HCT116 (cell line): ENCODE measurements at regions of chrX and their contacts with region 1.

Region 1: GRCh38 chrX:100615005-100615404 is 21.6 kb downstream of the TSPAN6 start:
- DNase-seq: peak; percentile 22
- ATAC-seq: peak; percentile 71
- H3K4me3 ChIP-seq: no peak overlapping the region
- H3K27ac ChIP-seq: no peak overlapping the region
- H3K4me1 ChIP-seq: peaks cover 0 to 9% of the 10 kb centered on the region in 2 experiments; a peak in 2 of 4 replicates
- H3K27me3 ChIP-seq: no peaks in the 10 kb centered on the region
- CTCF ChIP-seq: peak; percentile 44 to 52 (median 51); a peak in 5 of 6 replicates
- POLR2A ChIP-seq: no peak
- RAD21 ChIP-seq: peak; percentile 30

Region 2: GRCh38 chrX:100512471-100512870 is 102.5 kb before region 1 on chrX:
- CTCF ChIA-PET with region 1: no interaction called
- POLR2A ChIA-PET with region 1: no interaction called
- RAD21 ChIA-PET with region 1: no interaction called
- intact Hi-C with region 1: loop called (anchors 10 kb)
- DNase-seq: peak; percentile 1
- ATAC-seq: no peak; the same call in 1 of the 2 replicates
- H3K4me3 ChIP-seq: no peak overlapping the region
- H3K27ac ChIP-seq: no peak overlapping the region
- H3K4me1 ChIP-seq: no peaks in the 10 kb centered on the region
- H3K27me3 ChIP-seq: no peaks in the 10 kb centered on the region; the same call in 1 of the 2 replicates
- CTCF ChIP-seq: peak; percentile 22 to 46 (median 40); a peak in 4 of 6 replicates
- POLR2A ChIP-seq: no peak
- RAD21 ChIP-seq: peak; percentile 53

Region 3: GRCh38 chrX:100636321-100636991 is 21.5 kb after region 1 on chrX and contains the start of gene TSPAN6:
- CTCF ChIA-PET with region 1: interaction called, 11 read pairs
- POLR2A ChIA-PET with region 1: interaction called, 3 read pairs
- RAD21 ChIA-PET with region 1: no interaction called
- intact Hi-C with region 1: no loop called
- DNase-seq: peak; percentile 81
- ATAC-seq: peak; percentile 99
- H3K4me3 ChIP-seq: peak within 1 kb of the TSS; percentile 61 to 66
- H3K27ac ChIP-seq: peak within 1 kb of the TSS; percentile 52; the same call in 1 of the 2 replicates
- H3K4me1 ChIP-seq: peaks cover 0 to 9% of the 10 kb centered on the region in 2 experiments; a peak in 1 of 4 replicates
- H3K27me3 ChIP-seq: no peaks in the 10 kb centered on the region
- CTCF ChIP-seq: peak; percentile 45 to 58 (median 49); a peak in 5 of 6 replicates
- POLR2A ChIP-seq: no peak
- RAD21 ChIP-seq: peak; percentile 46
- total RNA-seq, gene TSPAN6: 25.0 TPM

Region 4: DNA sequence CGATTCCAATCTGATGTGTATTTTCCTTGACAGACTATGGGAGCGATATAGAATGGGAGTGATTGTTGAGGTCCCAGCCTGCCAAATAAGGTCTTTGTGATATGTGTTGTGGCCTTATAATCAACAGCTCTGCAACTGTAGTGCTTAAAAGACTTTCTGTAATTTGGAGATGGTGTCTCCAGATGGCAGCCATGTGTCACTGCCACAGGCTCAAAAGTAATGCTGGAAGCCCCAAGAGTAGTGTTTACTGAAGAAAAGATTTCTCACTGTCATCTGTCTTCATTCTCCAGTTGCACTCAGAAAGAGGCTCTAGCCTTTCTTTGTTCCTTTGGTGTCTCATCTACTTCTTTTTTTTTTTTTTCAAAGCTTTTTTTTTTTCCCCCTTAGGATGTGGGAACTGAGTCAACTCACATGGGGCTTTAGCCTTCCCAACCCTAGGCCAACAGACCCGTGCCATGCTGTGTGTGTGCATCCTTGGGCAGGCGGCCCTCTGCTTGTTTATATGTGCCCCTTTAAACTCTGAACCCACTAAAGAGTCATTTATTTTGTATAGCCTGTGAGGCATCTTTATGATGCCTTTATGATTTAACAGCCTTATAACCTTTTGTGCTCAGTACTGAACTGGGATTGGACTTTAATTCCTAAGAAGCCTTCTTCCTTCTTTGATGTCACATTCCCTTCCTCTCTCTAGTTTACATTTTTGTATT is 44.6 kb after region 1 on chrX:
- CTCF ChIA-PET with region 1: no interaction called
- POLR2A ChIA-PET with region 1: no interaction called
- RAD21 ChIA-PET with region 1: no interaction called
- intact Hi-C with region 1: no loop called
- DNase-seq: no peak
- ATAC-seq: no peak
- H3K4me3 ChIP-seq: no peak overlapping the region
- H3K27ac ChIP-seq: no peak overlapping the region
- H3K4me1 ChIP-seq: peaks cover 0 to 2% of the 10 kb centered on the region in 2 experiments; a peak in 1 of 4 replicates
- H3K27me3 ChIP-seq: no peaks in the 10 kb centered on the region
- CTCF ChIP-seq: no peak
- POLR2A ChIP-seq: no peak
- RAD21 ChIP-seq: no peak